Testis (tissue), 5 donors: ENCODE measurements at regions of chr3 and their contacts with region 1.

Region 1: DNA sequence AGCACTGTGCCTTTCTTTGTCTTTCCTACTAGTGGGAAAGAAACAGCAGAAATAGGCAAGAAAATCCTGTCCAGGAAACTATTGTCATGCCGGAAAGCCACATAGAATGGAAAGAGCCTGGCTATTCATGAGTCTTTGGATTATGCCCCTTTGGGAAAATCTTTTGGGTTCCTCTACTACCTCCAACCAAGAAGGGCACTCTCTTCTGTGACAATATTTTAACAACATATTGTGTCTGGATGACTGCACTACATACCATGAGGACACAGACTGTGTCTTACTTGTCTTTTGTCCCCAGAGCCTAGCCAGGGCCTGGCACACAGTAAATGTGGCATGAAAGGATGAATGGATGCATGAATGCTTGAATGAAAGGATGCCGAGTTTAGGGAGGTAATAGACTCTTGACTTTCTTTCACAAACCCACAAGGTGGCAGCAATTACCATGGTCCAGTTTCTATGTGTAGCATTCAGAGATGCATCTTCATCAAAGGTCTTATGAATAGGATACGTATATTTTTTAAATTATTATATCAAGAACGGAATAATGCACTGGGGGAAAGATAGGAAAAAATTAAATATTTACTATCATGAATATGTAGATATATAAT is 30.3 kb downstream of the ARL14 start:
- DNase-seq: peak; percentile 26
- H3K4me3 ChIP-seq: no peak overlapping the region
- H3K27ac ChIP-seq: no peak overlapping the region
- H3K4me1 ChIP-seq: no peaks in the 10 kb centered on the region
- H3K27me3 ChIP-seq: no peaks in the 10 kb centered on the region
- CTCF ChIP-seq: peak in 2 of 3 experiments; percentile 24 to 55
- POLR2A ChIP-seq: no peak

Region 2: GRCh38 chr3:160931474-160931873 is 224.2 kb after region 1 on chr3:
- intact Hi-C with region 1: loop called (anchors 10 kb)
- DNase-seq: no peak
- H3K4me3 ChIP-seq: no peak overlapping the region
- H3K27ac ChIP-seq: no peak overlapping the region
- H3K4me1 ChIP-seq: no peaks in the 10 kb centered on the region
- H3K27me3 ChIP-seq: no peaks in the 10 kb centered on the region
- CTCF ChIP-seq: no peak
- POLR2A ChIP-seq: no peak